ENCODE measurements at regions of chr18 and their contacts with region 1.

Region 1: DNA sequence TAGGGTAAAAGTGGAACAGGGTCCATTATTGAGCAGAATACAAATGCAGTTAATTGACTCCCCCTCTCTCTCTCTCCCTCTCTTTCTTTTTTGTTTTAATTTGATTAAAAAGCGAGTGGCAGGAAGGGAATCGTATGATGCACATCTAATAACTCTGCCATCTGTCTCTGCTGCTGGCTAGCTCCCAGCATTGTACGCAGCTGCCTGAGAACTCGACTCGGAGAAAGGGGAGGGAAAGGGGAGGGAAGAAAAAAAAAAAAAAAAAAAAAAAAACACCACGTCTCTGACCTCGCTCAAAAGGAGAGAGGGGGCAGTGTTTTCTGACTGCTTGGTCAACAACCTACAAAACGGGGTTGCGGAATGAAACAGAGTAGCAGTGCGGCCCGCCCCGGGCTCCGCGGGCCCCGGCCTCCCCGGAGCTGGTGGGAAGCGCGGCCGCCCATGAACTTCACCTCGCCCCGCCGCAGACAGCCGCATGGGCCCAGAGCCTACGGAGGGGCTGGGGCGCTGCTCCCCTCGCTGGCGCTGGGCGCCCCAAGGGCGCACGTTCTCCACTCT is 265.7 kb downstream of the TCF4 start:
- DNase-seq: peak; percentile 60
- ATAC-seq: peak; percentile 62
- H3K4me3 Mint-ChIP-seq: peak overlapping the region; percentile 90
- H3K27ac Mint-ChIP-seq: peak overlapping the region; percentile 92
- H3K4me1 Mint-ChIP-seq: peaks cover 63% of the 10 kb centered on the region
- H3K27me3 Mint-ChIP-seq: no peaks in the 10 kb centered on the region
- CTCF ChIP-seq: no peak

Region 2: DNA sequence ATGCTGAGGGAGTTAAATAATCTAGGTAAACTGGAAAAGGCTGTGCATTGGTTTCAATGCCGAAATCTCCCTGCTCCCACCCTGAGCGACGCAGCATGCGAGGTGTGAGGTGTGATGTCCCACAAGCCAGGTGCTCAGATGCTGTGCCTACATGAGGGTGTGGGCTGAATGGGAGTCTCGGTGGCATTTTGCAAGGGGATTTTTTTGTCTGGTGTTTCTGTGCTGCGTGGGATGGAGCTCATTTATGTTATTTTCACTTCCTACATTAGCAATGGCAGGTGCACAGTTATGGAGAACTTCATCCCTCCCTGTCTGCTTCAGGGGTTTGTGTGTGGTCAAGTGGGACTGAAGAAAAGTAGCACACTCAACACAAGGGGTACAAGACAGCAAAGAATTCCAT is 252.8 kb before region 1 on chr18:
- CTCF ChIA-PET with region 1: no interaction called
- POLR2A ChIA-PET with region 1: interaction called, 23 read pairs
- intact Hi-C with region 1: no loop called
- DNase-seq: peak; percentile 24
- ATAC-seq: peak; percentile 69
- H3K4me3 Mint-ChIP-seq: peak overlapping the region; percentile 59
- H3K27ac Mint-ChIP-seq: peak overlapping the region; percentile 94
- H3K4me1 Mint-ChIP-seq: peaks cover 77% of the 10 kb centered on the region
- H3K27me3 Mint-ChIP-seq: no peaks in the 10 kb centered on the region
- CTCF ChIP-seq: no peak

Region 3: DNA sequence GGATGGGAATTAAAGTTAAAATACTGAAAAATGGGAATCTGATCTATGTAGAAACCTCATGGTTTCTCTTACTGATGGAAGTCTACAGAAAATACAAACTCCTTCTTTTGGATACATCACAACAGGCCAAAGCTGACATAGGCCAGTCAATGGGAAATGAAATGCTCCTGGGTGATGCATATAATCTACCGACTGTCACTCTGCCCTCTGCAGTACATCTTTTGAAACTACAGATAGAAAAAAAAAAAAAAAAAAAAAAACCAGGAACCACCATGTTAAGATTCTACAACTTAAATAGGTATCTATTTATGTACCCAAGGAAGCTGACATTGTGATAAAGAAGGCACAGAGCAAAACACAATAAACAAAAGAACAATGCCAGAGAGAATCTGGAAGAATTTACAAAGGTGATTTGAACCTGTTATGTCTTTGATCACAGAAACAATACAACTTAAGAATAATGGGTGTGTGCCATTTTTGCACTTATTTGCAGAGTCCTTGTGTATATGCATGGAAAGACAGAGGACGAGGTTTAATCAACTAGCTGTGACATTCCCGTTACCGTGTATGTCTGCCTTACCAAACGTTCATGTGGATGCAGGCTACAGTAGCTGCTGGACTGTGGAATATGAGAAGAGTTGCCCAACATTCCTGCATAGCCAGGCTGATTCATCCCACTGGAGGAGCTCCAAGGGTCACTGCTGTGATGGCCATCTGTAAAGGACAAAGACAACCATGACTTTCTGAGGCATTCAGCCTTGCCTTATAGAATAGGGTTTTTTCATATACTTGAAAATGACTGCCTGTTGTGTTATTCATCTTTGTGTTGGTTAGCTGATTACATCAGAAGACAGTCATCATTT is 47.0 kb before region 1 on chr18:
- CTCF ChIA-PET with region 1: interaction called, 3 read pairs
- POLR2A ChIA-PET with region 1: interaction called, 15 read pairs
- intact Hi-C with region 1: no loop called
- DNase-seq: no peak
- ATAC-seq: peak; percentile 73
- H3K4me3 Mint-ChIP-seq: no peak overlapping the region
- H3K27ac Mint-ChIP-seq: peak overlapping the region; percentile 57
- H3K4me1 Mint-ChIP-seq: peaks cover 49% of the 10 kb centered on the region
- H3K27me3 Mint-ChIP-seq: no peaks in the 10 kb centered on the region
- CTCF ChIP-seq: no peak

Region 4: GRCh38 chr18:55343396-55344073 is 21.3 kb after region 1 on chr18:
- CTCF ChIA-PET with region 1: interaction called, 3 read pairs
- POLR2A ChIA-PET with region 1: interaction called, 13 read pairs
- intact Hi-C with region 1: no loop called
- DNase-seq: no peak
- ATAC-seq: peak; percentile 82
- H3K4me3 Mint-ChIP-seq: no peak overlapping the region
- H3K27ac Mint-ChIP-seq: no peak overlapping the region
- H3K4me1 Mint-ChIP-seq: peaks cover 18% of the 10 kb centered on the region
- H3K27me3 Mint-ChIP-seq: no peaks in the 10 kb centered on the region
- CTCF ChIP-seq: peak; percentile 34

Region 5: GRCh38 chr18:55589625-55590291 is 267.5 kb after region 1 on chr18:
- CTCF ChIA-PET with region 1: no interaction called
- POLR2A ChIA-PET with region 1: interaction called, 3 read pairs
- intact Hi-C with region 1: loop called (anchors 2 kb)
- DNase-seq: peak; percentile 84
- ATAC-seq: peak; percentile 86
- H3K4me3 Mint-ChIP-seq: peak overlapping the region; percentile 89
- H3K27ac Mint-ChIP-seq: peak overlapping the region; percentile 89
- H3K4me1 Mint-ChIP-seq: peaks cover 38% of the 10 kb centered on the region
- H3K27me3 Mint-ChIP-seq: peaks cover 4% of the 10 kb centered on the region
- CTCF ChIP-seq: no peak

Region 6: DNA sequence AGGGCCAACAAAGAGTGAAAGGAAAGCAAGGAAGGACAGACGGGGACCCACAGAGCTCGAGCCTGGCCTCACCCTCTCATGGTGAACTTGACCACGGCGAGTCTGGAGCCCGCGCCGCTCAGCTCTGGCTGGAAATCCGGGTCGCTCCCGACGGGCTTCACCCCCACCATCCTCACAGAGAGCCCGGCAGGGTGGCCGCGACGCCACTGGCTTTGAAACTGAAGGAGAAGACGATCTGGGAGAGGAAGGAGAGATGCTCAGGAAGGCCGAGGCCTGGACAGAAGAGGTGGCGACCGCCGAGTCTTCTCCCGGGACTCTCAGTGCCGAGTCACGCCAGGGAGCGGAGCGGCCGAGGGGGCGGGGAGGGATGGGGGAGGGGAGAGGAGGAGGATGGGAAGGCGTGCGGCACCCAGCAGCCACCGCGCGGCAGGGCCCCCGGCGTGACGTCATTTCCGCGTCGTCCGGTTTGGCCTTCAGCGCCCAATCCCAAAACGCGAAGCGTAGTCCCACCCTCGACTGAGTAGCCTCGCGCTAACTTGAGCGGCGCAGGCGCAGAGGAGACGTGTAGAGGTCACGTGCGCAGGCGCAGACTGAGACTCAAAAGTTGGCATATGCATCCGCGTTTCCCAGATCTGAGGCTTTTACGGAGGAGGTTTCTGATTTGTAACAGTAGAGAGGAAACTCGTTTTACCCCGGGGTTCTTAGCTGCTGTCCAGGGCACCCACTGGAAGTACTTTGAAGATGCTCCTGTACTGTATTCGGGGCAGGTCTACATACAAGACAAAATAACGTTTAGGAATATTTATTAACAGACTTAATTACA is 1316.2 kb after region 1 on chr18 and contains the start of gene TXNL1:
- CTCF ChIA-PET with region 1: no interaction called
- POLR2A ChIA-PET with region 1: interaction called, 7 read pairs
- intact Hi-C with region 1: loop called (anchors 2 kb)
- DNase-seq: peak; percentile 95
- ATAC-seq: peak; percentile 96
- H3K4me3 Mint-ChIP-seq: peak within 1 kb of the TSS; percentile 96
- H3K27ac Mint-ChIP-seq: peak within 1 kb of the TSS; percentile 99
- H3K4me1 Mint-ChIP-seq: peaks cover 52% of the 10 kb centered on the region
- H3K27me3 Mint-ChIP-seq: no peaks in the 10 kb centered on the region
- CTCF ChIP-seq: no peak
- total RNA-seq, gene TXNL1: 53.4 and 55.4 TPM in 2 replicates

Measured in activated B cell treated with CpG ODN at 0.5 μM for 24 hours (primary cell).